Endothelial cell of umbilical vein (primary cell): ENCODE measurements at regions of chr6 and their contacts with region 1.

Region 1: GRCh38 chr6:46221222-46221793 is 50.5 kb upstream of the ENPP5 start:
- DNase-seq: peak; percentile 43
- H3K4me3 ChIP-seq: no peak overlapping the region
- H3K27ac ChIP-seq: no peak overlapping the region
- H3K4me1 ChIP-seq: no peaks in the 10 kb centered on the region
- H3K27me3 ChIP-seq: peaks cover 3 to 13% of the 10 kb centered on the region in 2 experiments
- CTCF ChIP-seq: peak; percentile 58 to 73
- POLR2A ChIP-seq: no peak

Region 2: DNA sequence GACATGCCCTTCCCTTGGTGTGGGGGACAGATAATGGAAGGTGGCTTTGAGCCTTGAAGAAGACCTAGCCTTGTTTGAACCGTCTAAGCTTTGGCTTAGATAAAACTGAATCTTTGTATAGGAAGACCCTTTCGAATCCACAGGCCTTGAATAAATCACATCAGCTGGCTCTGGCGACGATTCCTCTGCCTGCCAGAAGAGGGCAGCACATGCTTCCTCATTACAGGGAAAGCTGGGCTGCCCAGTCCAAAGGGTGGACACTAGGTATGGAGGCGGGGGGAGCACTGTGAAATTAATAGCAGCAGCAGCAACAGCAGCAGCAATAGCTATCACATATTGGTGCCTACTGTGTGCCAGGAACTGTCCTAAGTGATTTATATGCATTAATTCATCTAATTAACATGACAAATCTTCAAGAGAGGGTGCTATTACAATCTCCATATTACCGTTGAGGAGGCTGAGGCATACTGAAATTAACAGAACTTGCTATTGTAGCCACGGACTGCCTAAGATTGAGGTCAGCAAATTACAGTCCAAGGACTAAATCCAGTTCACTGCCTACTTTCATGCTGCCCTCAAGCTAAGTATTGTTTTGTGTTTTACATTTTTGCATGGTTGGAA is 290.8 kb before region 1 on chr6:
- CTCF ChIA-PET with region 1: interaction called, 4 read pairs
- POLR2A ChIA-PET with region 1: no interaction called
- dilution Hi-C with region 1: no loop called
- intact Hi-C with region 1: loop called (anchors 2 kb)
- DNase-seq: peak; percentile 67
- H3K4me3 ChIP-seq: no peak overlapping the region
- H3K27ac ChIP-seq: no peak overlapping the region
- H3K4me1 ChIP-seq: no peaks in the 10 kb centered on the region
- H3K27me3 ChIP-seq: peaks cover 0 to 3% of the 10 kb centered on the region in 2 experiments
- CTCF ChIP-seq: peak; percentile 92 to 94
- POLR2A ChIP-seq: no peak

Region 3: GRCh38 chr6:46090115-46091079 is 130.9 kb before region 1 on chr6:
- CTCF ChIA-PET with region 1: interaction called, 42 read pairs
- POLR2A ChIA-PET with region 1: no interaction called
- dilution Hi-C with region 1: no loop called
- intact Hi-C with region 1: loop called (anchors 1 kb)
- DNase-seq: peak; percentile 58
- H3K4me3 ChIP-seq: no peak overlapping the region
- H3K27ac ChIP-seq: no peak overlapping the region
- H3K4me1 ChIP-seq: no peaks in the 10 kb centered on the region
- H3K27me3 ChIP-seq: peaks cover 5 to 13% of the 10 kb centered on the region in 2 experiments
- CTCF ChIP-seq: peak; percentile 59 to 73
- POLR2A ChIP-seq: no peak

Region 4: GRCh38 chr6:46246081-46246480 is 24.8 kb after region 1 on chr6:
- CTCF ChIA-PET with region 1: no interaction called
- POLR2A ChIA-PET with region 1: no interaction called
- dilution Hi-C with region 1: no loop called
- intact Hi-C with region 1: no loop called
- DNase-seq: no peak
- H3K4me3 ChIP-seq: no peak overlapping the region
- H3K27ac ChIP-seq: no peak overlapping the region
- H3K4me1 ChIP-seq: no peaks in the 10 kb centered on the region
- H3K27me3 ChIP-seq: no peaks in the 10 kb centered on the region
- CTCF ChIP-seq: no peak
- POLR2A ChIP-seq: no peak

Region 5: GRCh38 chr6:46290421-46291274 is 69.3 kb after region 1 on chr6:
- CTCF ChIA-PET with region 1: no interaction called
- POLR2A ChIA-PET with region 1: no interaction called
- dilution Hi-C with region 1: no loop called
- intact Hi-C with region 1: loop called (anchors 2 kb)
- DNase-seq: peak; percentile 88
- H3K4me3 ChIP-seq: no peak overlapping the region
- H3K27ac ChIP-seq: peak overlapping the region; percentile 80
- H3K4me1 ChIP-seq: peaks cover 31% of the 10 kb centered on the region
- H3K27me3 ChIP-seq: peaks cover 5 to 14% of the 10 kb centered on the region in 2 experiments
- CTCF ChIP-seq: no peak
- POLR2A ChIP-seq: no peak

Region 6: DNA sequence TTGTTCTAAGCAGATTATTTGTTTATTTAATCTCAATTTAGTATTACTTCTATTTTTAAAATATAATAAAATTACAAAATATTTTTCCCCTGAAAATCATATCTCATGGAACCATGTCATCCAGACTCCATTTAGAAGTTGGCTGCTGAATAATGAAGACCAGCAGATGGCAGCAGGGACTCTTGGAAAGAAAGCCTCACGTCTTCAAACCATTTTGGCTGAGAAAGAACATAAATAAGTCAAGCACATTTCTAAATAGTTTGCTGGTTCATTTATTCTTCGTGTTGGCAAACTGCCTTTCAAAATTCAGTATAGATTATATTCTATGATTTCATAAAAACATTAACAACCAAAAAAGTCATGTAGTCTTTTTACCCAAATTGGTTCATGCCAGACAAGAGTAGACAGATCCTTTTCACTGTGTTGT is 198.3 kb after region 1 on chr6:
- CTCF ChIA-PET with region 1: interaction called, 11 read pairs
- POLR2A ChIA-PET with region 1: no interaction called
- dilution Hi-C with region 1: no loop called
- intact Hi-C with region 1: no loop called
- DNase-seq: peak; percentile 63
- H3K4me3 ChIP-seq: no peak overlapping the region
- H3K27ac ChIP-seq: no peak overlapping the region
- H3K4me1 ChIP-seq: no peaks in the 10 kb centered on the region
- H3K27me3 ChIP-seq: peaks cover 4 to 12% of the 10 kb centered on the region in 2 experiments
- CTCF ChIP-seq: peak; percentile 46 to 63
- POLR2A ChIP-seq: no peak

Region 7: DNA sequence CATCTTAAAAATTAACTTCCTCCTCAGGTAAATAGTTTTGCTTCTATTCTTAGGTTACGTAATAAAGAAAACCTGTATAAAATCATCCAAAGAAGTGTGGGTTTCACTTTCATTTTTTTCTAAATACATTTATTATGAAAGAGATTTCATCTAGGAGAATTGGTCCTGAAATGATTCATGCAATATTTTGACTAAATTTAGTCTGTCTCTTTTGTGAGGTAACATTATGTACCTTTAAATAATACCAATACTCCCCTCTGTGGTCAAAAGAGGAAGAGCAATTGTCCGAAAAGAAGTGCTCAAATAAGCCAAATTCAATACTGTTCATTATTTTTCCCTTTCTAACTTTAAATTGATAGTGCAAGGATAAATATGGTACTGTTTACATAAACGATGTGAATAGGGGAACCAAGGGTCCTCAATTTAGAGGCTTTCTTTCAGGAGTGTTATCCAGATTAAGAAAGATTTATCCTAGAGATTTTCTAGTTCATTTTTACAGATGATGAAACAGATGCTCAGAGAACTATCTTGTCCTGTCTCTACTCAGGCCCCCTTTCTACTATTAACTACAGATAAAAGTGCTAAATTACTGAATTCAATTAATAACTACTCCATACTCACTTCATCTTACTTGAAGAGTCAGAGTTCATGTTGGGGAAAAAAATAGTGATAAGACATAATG is 405.1 kb after region 1 on chr6:
- CTCF ChIA-PET with region 1: no interaction called
- POLR2A ChIA-PET with region 1: no interaction called
- dilution Hi-C with region 1: no loop called
- intact Hi-C with region 1: loop called (anchors 1 kb)
- DNase-seq: peak; percentile 27
- H3K4me3 ChIP-seq: no peak overlapping the region
- H3K27ac ChIP-seq: no peak overlapping the region
- H3K4me1 ChIP-seq: no peaks in the 10 kb centered on the region
- H3K27me3 ChIP-seq: no peaks in the 10 kb centered on the region
- CTCF ChIP-seq: peak in 1 of 2 donors; percentile 16
- POLR2A ChIP-seq: no peak

Region 8: GRCh38 chr6:46932526-46933319 is 711.4 kb after region 1 on chr6:
- CTCF ChIA-PET with region 1: no interaction called
- POLR2A ChIA-PET with region 1: no interaction called
- dilution Hi-C with region 1: no loop called
- intact Hi-C with region 1: no loop called
- DNase-seq: no peak
- H3K4me3 ChIP-seq: no peak overlapping the region
- H3K27ac ChIP-seq: no peak overlapping the region
- H3K4me1 ChIP-seq: peaks cover 12% of the 10 kb centered on the region
- H3K27me3 ChIP-seq: peaks cover 0 to 4% of the 10 kb centered on the region in 2 experiments
- CTCF ChIP-seq: no peak
- POLR2A ChIP-seq: no peak